ENCODE measurements at regions of chr6 and their contacts with region 1.

Region 1: GRCh38 chr6:125918681-125919566 is 37.6 kb upstream of the HINT3 start:
- DNase-seq: peak; percentile 97
- H3K4me3 Mint-ChIP-seq: peak overlapping the region; percentile 90
- H3K27ac Mint-ChIP-seq: peak overlapping the region; percentile 99
- H3K4me1 Mint-ChIP-seq: peaks cover 47% of the 10 kb centered on the region
- H3K27me3 Mint-ChIP-seq: no peaks in the 10 kb centered on the region
- CTCF ChIP-seq: no peak

Region 2: GRCh38 chr6:125623085-125623484 is 295.8 kb before region 1 on chr6:
- CTCF ChIA-PET with region 1: no interaction called
- POLR2A ChIA-PET with region 1: no interaction called
- intact Hi-C with region 1: no loop called
- DNase-seq: no peak
- H3K4me3 Mint-ChIP-seq: no peak overlapping the region
- H3K27ac Mint-ChIP-seq: no peak overlapping the region
- H3K4me1 Mint-ChIP-seq: no peaks in the 10 kb centered on the region
- H3K27me3 Mint-ChIP-seq: peaks cover 91% of the 10 kb centered on the region
- CTCF ChIP-seq: no peak

Region 3: DNA sequence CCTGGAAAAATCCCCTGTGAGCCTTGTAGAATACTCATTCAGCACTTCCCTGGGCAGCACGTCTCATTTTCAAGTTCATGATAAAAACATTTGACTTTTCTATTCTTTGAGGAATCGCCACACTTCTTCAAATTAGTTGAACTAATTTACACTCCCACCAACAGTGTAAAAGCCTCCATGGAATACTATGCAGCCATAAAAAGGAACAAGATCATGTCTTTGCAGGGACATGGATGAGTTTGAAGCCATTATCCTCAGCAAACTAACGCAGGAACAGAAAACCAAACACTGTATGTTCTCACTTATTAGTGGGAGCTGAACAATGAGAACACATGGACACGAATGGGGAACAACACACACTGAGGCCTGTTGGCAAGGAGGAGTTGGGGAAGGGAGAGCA is 271.5 kb before region 1 on chr6:
- CTCF ChIA-PET with region 1: no interaction called
- POLR2A ChIA-PET with region 1: no interaction called
- intact Hi-C with region 1: no loop called
- DNase-seq: no peak
- H3K4me3 Mint-ChIP-seq: no peak overlapping the region
- H3K27ac Mint-ChIP-seq: no peak overlapping the region
- H3K4me1 Mint-ChIP-seq: no peaks in the 10 kb centered on the region
- H3K27me3 Mint-ChIP-seq: peaks cover 79% of the 10 kb centered on the region
- CTCF ChIP-seq: no peak

Region 4: DNA sequence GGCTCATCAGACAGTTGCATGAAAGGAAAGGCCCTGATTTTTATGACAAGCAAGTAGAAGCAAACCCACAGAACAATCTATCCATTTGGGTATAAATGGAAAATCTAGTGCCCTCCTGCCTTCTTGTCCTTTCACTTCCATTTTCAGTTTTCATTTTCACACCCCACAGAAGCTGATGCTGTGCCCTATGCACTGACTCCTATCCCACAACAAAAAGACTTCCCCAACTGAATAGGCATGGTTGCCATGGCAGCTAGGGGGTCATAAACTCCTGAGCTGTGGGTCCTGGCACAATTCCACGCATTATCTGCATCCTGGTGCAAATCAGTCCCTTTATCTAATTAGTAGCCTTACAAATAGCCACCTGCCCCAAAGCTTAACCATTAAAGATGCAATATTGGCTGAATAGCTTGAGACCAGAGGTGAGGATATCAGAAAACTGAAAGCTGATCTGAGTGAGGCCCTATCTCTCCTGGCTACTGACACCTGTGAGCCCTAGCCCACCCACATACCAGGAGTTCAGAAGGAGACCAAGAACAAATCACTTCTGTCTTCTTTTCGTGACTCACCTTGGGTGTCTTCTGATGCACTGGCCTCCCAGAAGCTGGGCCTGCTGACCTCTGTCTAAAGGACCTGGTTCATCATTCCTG is 204.4 kb before region 1 on chr6:
- CTCF ChIA-PET with region 1: no interaction called
- POLR2A ChIA-PET with region 1: no interaction called
- intact Hi-C with region 1: no loop called
- DNase-seq: no peak
- H3K4me3 Mint-ChIP-seq: no peak overlapping the region
- H3K27ac Mint-ChIP-seq: no peak overlapping the region
- H3K4me1 Mint-ChIP-seq: no peaks in the 10 kb centered on the region
- H3K27me3 Mint-ChIP-seq: peaks cover 66% of the 10 kb centered on the region
- CTCF ChIP-seq: no peak

Region 5: GRCh38 chr6:125906158-125906998 is 12.5 kb before region 1 on chr6:
- CTCF ChIA-PET with region 1: interaction called, 37 read pairs
- POLR2A ChIA-PET with region 1: interaction called, 18 read pairs
- intact Hi-C with region 1: no loop called
- DNase-seq: peak; percentile 69
- H3K4me3 Mint-ChIP-seq: no peak overlapping the region
- H3K27ac Mint-ChIP-seq: peak overlapping the region; percentile 24
- H3K4me1 Mint-ChIP-seq: peaks cover 41% of the 10 kb centered on the region
- H3K27me3 Mint-ChIP-seq: no peaks in the 10 kb centered on the region
- CTCF ChIP-seq: peak; percentile 59

Region 6: DNA sequence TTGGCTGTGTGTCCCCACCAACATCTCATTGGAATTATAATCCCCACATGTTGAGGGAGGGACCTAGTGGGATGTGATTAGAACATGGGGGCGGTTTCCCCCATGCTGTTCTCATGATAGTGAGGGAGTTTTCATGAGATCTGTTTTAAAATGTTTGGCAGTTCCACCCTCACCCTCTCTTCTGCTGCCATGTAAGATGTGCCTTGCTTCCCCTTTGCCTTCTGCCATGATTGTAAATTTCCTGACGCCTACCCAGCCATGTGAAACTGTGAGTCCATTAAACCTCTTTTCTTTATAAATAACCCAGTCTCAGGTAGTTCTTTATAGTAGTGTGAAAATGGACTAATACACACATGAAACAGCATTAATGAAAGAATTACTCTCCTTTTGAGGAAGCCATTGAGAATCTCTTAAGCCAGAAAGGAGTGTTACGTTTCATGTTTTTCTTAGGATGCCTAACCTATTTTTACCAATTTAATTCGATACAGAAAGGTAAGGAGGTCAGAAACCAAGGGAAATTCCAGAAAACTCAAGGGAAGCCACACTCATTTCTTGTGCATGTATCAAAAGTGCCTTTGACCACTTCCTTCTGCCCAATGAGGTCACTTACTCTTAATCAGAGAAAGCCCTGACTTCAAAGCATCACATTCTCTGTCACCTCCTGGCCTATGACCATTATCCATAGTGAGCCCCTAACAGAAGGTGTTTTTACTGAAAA is 13.0 kb after region 1 on chr6:
- CTCF ChIA-PET with region 1: no interaction called
- POLR2A ChIA-PET with region 1: interaction called, 12 read pairs
- intact Hi-C with region 1: no loop called
- DNase-seq: no peak
- H3K4me3 Mint-ChIP-seq: no peak overlapping the region
- H3K27ac Mint-ChIP-seq: no peak overlapping the region
- H3K4me1 Mint-ChIP-seq: no peaks in the 10 kb centered on the region
- H3K27me3 Mint-ChIP-seq: no peaks in the 10 kb centered on the region
- CTCF ChIP-seq: no peak

Measured in MCF 10A (cell line).